ENCODE measurements at regions of chr19 and their contacts with region 1.

Region 1: GRCh38 chr19:55160128-55160985 is 2.8 kb upstream of the TNNI3 start:
- DNase-seq: peak; percentile 91
- H3K4me3 Mint-ChIP-seq: no peak overlapping the region
- H3K27ac Mint-ChIP-seq: no peak overlapping the region
- H3K4me1 Mint-ChIP-seq: peaks cover 17% of the 10 kb centered on the region
- H3K27me3 Mint-ChIP-seq: peaks cover 23% of the 10 kb centered on the region

Region 2: DNA sequence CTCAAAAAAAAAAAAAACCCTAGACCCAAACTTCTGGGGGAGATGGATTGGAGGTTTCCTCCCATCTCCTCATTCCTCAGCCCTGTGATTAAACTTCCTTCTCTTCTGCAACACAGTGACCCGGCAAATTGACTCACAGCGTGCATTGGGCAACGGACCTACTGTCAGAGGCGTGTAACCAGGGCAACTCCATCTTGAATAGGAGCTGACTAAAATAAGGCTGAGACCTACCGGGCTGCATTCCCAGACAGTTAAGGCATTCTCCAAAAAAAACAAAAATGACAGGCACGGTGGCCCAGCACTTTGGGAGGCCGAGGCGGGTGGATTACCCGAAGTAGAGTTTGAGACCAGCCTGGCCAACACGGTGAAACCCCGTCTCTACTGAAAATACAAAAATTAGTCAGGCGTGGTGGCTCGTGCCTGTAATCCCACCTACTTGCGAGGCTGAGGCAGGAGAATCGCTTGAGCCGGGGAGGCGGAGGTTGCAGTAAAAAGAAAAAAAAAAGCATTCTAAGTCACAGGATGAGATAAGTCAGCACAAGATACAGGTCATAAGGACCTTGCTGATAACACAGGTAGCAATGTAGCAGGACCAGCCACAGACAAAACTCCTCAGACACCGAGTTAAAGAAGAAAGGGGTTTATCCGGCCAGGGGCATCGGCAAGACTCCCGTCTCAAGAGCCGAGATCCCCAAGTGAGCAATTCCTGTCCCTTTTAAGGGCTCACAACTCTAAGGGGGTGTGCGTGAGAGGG is 207.6 kb before region 1 on chr19:
- CTCF ChIA-PET with region 1: no interaction called
- POLR2A ChIA-PET with region 1: no interaction called
- DNase-seq: no peak
- H3K4me3 Mint-ChIP-seq: no peak overlapping the region
- H3K27ac Mint-ChIP-seq: no peak overlapping the region
- H3K4me1 Mint-ChIP-seq: no peaks in the 10 kb centered on the region
- H3K27me3 Mint-ChIP-seq: peaks cover 6% of the 10 kb centered on the region

Region 3: GRCh38 chr19:55146078-55146704 is 14.2 kb before region 1 on chr19:
- CTCF ChIA-PET with region 1: interaction called, 11 read pairs
- POLR2A ChIA-PET with region 1: no interaction called
- DNase-seq: no peak
- H3K4me3 Mint-ChIP-seq: no peak overlapping the region
- H3K27ac Mint-ChIP-seq: no peak overlapping the region
- H3K4me1 Mint-ChIP-seq: peaks cover 2% of the 10 kb centered on the region
- H3K27me3 Mint-ChIP-seq: peaks cover 23% of the 10 kb centered on the region

Region 4: GRCh38 chr19:55178781-55179599 is 18.6 kb after region 1 on chr19:
- CTCF ChIA-PET with region 1: interaction called, 10 read pairs
- POLR2A ChIA-PET with region 1: no interaction called
- DNase-seq: peak; percentile 95
- H3K4me3 Mint-ChIP-seq: peak overlapping the region; percentile 59
- H3K27ac Mint-ChIP-seq: no peak overlapping the region
- H3K4me1 Mint-ChIP-seq: peaks cover 29% of the 10 kb centered on the region
- H3K27me3 Mint-ChIP-seq: peaks cover 48% of the 10 kb centered on the region

Region 5: DNA sequence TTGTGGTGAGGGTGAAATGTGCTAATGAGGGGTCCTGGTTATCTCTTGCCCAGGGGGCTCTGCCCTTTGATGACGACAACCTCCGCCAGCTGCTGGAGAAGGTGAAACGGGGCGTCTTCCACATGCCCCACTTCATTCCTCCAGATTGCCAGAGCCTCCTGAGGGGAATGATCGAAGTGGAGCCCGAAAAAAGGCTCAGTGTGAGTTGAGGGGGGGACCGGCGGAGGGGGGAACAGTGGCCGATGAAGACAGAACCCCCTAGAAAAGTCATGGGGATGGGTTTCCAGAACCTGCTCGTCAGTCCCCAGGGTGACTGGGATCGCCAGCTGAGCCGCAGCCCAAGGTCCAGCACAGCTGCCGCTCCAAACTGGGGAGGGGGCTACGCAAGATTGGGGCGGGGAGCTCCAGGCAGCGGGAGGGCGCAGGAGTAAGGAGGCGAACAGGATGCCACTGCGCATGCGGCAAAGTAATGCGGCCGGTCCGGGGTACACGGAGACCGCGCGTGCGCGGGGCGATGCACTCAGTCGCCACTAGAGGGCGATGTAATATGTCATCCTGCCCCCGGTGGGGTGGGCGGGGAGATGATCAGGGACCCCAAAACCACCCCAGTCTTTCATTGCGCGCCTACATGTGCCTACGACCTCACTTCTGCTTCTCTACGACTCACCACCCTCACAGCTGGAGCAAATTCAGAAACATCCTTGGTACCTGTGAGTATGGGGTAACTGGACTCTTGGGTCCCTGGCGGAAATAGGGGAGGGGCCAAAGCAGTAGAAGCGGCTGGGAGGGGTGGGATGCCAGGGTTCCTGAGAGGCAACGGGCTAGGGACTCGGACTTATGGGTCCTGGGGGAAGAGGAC is 141.3 kb after region 1 on chr19:
- CTCF ChIA-PET with region 1: no interaction called
- POLR2A ChIA-PET with region 1: no interaction called
- DNase-seq: peak; percentile 95
- H3K4me3 Mint-ChIP-seq: peak overlapping the region; percentile 91
- H3K27ac Mint-ChIP-seq: peak overlapping the region; percentile 94
- H3K4me1 Mint-ChIP-seq: peaks cover 15% of the 10 kb centered on the region
- H3K27me3 Mint-ChIP-seq: peaks cover 3% of the 10 kb centered on the region

Region 6: DNA sequence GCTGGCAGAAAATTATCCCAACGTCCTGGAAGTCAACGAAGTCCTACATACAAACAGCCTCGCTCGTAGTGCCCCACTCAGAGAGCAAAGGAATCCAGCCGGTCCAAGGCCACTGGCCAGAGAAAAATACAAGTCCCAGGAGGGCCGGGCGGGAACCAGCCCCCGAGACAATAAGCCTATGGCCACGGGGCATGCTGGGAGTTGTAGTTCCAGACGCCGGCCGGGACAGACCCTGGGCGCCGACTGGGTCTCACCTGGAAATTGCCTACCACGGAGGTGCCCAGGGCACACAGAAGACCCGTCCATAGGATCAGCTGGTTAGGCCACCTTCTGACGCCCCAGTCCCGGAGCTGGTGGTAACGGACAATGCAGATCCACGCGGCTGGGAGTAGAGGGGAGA is 159.4 kb after region 1 on chr19:
- CTCF ChIA-PET with region 1: no interaction called
- POLR2A ChIA-PET with region 1: no interaction called
- DNase-seq: no peak
- H3K4me3 Mint-ChIP-seq: no peak overlapping the region
- H3K27ac Mint-ChIP-seq: no peak overlapping the region
- H3K4me1 Mint-ChIP-seq: peaks cover 7% of the 10 kb centered on the region
- H3K27me3 Mint-ChIP-seq: peaks cover 14% of the 10 kb centered on the region

Measured in activated CD4-positive, alpha-beta T cell treated with anti-CD3 and anti-CD28 coated beads, Interleukin-2, amount 10 ng/mL, durations not matched to agents 7 days and 5 days (primary cell).